Naive thymus-derived CD8-positive, alpha-beta T cell (primary cell): ENCODE measurements at regions of chr9 and their contacts with region 1.

Region 1: GRCh38 chr9:35102926-35103659 is at the start of gene STOML2:
- DNase-seq: peak; percentile 75 to 97 (median 90)
- ATAC-seq: peak; percentile 94 to 97
- H3K4me3 Mint-ChIP-seq: peak within 1 kb of the TSS; percentile 88 to 97 (median 93)
- H3K27ac Mint-ChIP-seq: peak within 1 kb of the TSS; percentile 95 to 100 (median 99)
- H3K4me1 Mint-ChIP-seq: peaks cover 20 to 44% (median 33%) of the 10 kb centered on the region in 4 donors
- H3K27me3 Mint-ChIP-seq: no peaks in the 10 kb centered on the region
- polyA plus RNA-seq, gene STOML2: 86.7 to 93.9 (median 88.9) TPM

Region 2: DNA sequence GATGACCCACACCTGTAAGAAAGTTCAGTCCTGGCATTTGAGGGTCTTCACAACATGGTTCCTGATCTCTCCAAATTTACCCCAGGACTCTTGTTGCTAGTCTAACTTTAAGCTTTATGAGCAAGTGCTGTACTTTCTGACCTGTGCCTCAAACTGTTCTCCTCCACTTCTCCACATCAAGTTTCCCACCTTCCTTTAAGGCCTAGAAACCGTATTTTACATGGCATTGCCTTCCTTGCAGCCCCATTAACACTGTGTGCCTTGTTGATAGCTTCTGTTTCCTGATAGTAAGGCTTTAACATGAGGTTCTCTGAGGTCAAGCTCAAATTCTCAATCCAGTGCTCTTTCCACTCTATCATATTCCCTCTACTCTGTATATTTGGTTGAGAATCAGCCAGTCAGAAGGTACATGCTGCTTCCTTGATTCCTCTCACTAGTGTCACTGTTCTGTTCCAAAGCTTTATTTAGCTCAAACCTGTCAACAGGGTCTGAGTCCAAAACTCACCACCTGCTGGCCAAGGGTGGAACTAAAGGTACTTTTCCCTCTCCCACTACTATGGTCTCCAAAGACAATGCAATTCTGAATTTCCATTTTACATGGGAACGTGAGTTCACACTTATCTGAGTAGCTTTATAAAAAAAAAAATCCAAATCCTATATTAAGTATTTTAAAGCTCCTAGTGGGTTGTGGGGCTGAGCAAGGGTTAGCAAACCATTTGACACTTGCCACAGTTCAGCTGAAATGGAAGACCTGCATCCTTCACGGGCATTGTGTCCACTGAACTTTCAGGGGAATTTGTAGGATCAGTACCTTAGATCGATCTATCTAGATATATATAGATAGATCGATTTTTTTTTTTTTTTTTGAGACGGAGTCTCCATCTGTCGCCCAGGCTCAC is 51.8 kb before region 1 on chr9:
- POLR2A ChIA-PET with region 1: no interaction called
- DNase-seq: peak in 8 of 10 donors; percentile 19 to 55 (median 43)
- ATAC-seq: peak; percentile 78 to 82
- H3K4me3 Mint-ChIP-seq: no peak overlapping the region
- H3K27ac Mint-ChIP-seq: peak overlapping the region in 6 of 10 donors; percentile 18 to 72 (median 50)
- H3K4me1 Mint-ChIP-seq: peaks cover 4 to 8% (median 6%) of the 10 kb centered on the region in 4 donors
- H3K27me3 Mint-ChIP-seq: no peaks in the 10 kb centered on the region

Region 3: DNA sequence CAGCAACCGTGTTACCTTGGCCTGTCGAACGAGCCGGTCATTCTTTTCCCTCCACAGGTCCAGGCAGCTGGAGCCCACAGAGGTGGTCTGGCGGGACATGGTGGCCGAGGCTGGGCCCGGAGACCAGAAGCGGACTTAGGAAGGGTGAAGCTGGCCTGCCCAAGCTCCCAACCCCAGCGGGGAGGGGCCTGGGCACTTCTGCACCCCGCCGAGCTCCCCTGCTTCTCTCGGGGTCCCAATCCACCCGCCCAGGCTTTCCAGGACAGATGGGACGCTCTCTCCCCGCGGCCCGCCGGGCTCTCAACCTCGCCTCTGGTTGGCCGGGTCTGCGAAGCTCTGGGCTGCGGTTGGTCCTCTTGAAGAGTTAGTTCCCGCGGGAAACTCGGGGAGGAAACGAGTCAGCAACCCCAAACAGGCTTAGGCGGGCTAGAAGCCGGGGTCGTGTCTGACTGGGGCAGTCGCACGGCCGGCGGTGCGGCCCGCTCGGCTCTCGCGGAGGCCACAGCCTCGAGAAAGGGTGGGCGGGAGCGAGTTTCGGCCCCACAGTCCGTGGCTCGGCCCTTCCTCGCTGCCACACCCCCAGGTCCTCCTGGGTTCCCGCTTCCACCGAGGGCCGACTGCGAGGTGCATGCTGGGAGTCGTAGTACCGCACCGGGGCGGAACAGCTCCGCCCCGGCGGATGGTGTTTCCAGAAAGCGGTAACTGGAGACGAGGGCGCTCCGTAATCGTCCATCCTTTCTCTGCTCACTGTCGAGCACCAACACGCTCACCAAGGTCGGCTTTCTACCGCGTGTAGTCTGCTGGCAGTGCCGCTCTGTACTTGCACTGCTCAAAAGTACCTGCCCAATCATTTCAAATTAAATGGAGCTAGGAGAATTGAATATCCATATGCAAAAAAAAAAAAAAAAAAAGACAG is 23.4 kb before region 1 on chr9 and contains the start of gene FANCG:
- POLR2A ChIA-PET with region 1: interaction called, 52 read pairs
- DNase-seq: peak; percentile 58 to 83 (median 72)
- ATAC-seq: peak; percentile 94
- H3K4me3 Mint-ChIP-seq: peak within 1 kb of the TSS; percentile 90 to 96 (median 95)
- H3K27ac Mint-ChIP-seq: peak within 1 kb of the TSS; percentile 75 to 95 (median 90)
- H3K4me1 Mint-ChIP-seq: peaks cover 13 to 29% (median 20%) of the 10 kb centered on the region in 4 donors
- H3K27me3 Mint-ChIP-seq: no peaks in the 10 kb centered on the region
- polyA plus RNA-seq, gene FANCG: 4.4 to 9.3 (median 5.9) TPM

Region 4: DNA sequence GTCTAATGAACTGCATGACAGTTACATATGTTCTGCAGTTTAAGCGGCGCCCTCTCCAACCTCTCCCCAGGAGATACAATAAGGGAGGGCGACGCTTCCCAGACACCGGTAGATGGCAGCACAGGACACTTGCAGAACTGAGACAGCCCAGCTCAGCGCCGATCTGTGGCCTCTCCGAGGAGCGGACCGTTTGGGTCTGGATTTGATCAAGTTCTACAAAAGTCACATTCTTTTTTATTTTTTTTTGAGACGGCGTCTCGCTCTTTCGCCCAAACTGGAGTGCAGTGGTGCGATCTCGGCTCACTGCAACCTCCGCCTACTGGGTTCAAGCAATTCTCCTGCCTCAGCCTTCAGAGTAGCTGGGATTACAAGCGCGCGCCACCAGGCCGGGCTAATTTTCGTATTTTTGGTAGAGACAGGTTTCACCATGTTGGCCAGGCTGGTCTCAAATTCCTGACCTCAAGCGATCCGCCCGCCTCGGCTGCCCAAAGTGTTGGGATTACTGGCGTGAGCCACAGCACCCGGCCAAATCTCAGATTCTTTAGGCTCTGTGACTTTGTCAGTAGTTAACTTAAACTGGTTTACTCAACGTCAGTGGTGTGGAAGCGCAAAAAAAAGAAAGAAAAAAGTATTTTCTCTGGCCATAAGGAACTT is 13.9 kb after region 1 on chr9:
- POLR2A ChIA-PET with region 1: interaction called, 29 read pairs
- DNase-seq: peak; percentile 75 to 94 (median 87)
- ATAC-seq: peak; percentile 66 to 76
- H3K4me3 Mint-ChIP-seq: peak overlapping the region; percentile 87 to 98 (median 94)
- H3K27ac Mint-ChIP-seq: peak overlapping the region; percentile 84 to 99 (median 95)
- H3K4me1 Mint-ChIP-seq: peaks cover 30 to 42% (median 40%) of the 10 kb centered on the region in 4 donors
- H3K27me3 Mint-ChIP-seq: peaks cover 0 to 2% (median 0%) of the 10 kb centered on the region in 5 donors

Region 5: GRCh38 chr9:35134920-35135319 is 31.8 kb after region 1 on chr9:
- POLR2A ChIA-PET with region 1: no interaction called
- DNase-seq: no peak
- ATAC-seq: no peak
- H3K4me3 Mint-ChIP-seq: no peak overlapping the region
- H3K27ac Mint-ChIP-seq: no peak overlapping the region
- H3K4me1 Mint-ChIP-seq: no peaks in the 10 kb centered on the region
- H3K27me3 Mint-ChIP-seq: peaks cover 0 to 1% (median 0%) of the 10 kb centered on the region in 5 donors